ENCODE measurements at regions of chr5 and their contacts with region 1.

Region 1: DNA sequence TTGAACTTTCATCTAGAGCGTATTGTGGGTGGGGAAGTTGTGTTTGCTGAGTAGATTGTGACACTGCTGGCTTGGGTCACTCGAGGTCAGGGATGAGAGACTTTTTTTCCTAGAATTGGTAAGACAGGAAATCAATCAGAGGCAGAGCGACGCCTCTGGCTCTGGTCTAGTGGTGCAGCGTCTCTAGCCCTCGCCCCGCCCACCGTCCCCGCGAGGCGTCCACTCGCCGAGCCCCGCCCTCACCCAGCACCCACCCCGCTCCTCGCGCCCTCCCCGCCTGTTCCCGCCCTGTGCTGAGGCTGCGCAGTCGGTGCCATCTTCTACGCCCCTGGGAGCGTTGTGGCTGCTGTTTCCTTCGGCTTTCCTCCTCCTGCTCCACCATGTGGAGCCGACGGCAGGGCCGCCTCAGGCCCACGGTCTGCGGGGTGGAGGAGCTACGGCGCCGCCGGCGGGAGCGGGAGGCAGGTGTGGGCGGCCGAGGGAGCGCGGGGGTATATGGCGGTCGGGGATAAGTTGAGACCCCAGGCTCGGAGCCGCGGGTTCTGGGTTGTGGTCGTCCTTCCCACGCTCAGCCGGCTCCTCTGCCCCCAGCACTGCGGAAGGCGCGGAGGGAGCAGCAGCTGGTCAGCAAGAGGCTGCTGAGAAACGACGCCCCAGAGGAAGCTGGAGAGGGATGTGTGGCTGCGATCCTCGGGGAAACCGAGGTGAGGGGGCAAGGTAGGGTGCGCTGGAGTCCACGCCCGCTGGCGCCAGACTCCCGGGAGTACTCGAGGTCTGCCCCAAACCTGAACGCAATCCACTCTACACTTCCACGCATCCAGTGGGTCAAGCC is at the start of gene TMCO6:
- DNase-seq: peak; percentile 99
- ATAC-seq: peak; percentile 98 to 99 (median 99)
- H3K4me3 ChIP-seq: peak within 1 kb of the TSS; percentile 38 to 92 (median 79)
- H3K27ac ChIP-seq: peak within 1 kb of the TSS; percentile 83 to 95 (median 92)
- H3K4me1 ChIP-seq: peaks cover 0 to 40% (median 17%) of the 10 kb centered on the region in 12 donors
- H3K27me3 ChIP-seq: no peaks in the 10 kb centered on the region
- CTCF ChIP-seq: peak; percentile 58 to 87 (median 70)
- POLR2A ChIP-seq: peak in 1 of 2 donors; percentile 67
- total RNA-seq, gene TMCO6: 2.2 to 11.7 (median 3.3) TPM

Region 2: GRCh38 chr5:140372971-140373487 is 266.3 kb before region 1 on chr5:
- intact Hi-C with region 1: loop called in 6 of 10 experiments (anchors 2 to 10 kb)
- DNase-seq: peak; percentile 75 to 79 (median 78)
- ATAC-seq: peak; percentile 39 to 90 (median 86)
- H3K4me3 ChIP-seq: no peak overlapping the region
- H3K27ac ChIP-seq: peak overlapping the region in 1 of 12 donors; percentile 3
- H3K4me1 ChIP-seq: peaks cover 0 to 9% (median 8%) of the 10 kb centered on the region in 12 donors
- H3K27me3 ChIP-seq: no peaks in the 10 kb centered on the region
- CTCF ChIP-seq: peak; percentile 69 to 90 (median 79)
- POLR2A ChIP-seq: no peak

Region 3: GRCh38 chr5:140401362-140402257 is 237.8 kb before region 1 on chr5 and contains the start of gene ANKHD1:
- intact Hi-C with region 1: loop called in 3 of 10 experiments (anchors 5 to 10 kb)
- DNase-seq: peak; percentile 99
- ATAC-seq: peak; percentile 92 to 97 (median 96)
- H3K4me3 ChIP-seq: peak within 1 kb of the TSS; percentile 68 to 100 (median 94)
- H3K27ac ChIP-seq: peak within 1 kb of the TSS; percentile 80 to 98 (median 96)
- H3K4me1 ChIP-seq: peaks cover 12 to 42% (median 30%) of the 10 kb centered on the region in 12 donors
- H3K27me3 ChIP-seq: no peaks in the 10 kb centered on the region
- CTCF ChIP-seq: peak in 2 of 12 donors; percentile 3 to 24
- POLR2A ChIP-seq: peak; percentile 95 to 98
- total RNA-seq, gene ANKHD1: 49.5 to 78.8 (median 63.6) TPM

Region 4: DNA sequence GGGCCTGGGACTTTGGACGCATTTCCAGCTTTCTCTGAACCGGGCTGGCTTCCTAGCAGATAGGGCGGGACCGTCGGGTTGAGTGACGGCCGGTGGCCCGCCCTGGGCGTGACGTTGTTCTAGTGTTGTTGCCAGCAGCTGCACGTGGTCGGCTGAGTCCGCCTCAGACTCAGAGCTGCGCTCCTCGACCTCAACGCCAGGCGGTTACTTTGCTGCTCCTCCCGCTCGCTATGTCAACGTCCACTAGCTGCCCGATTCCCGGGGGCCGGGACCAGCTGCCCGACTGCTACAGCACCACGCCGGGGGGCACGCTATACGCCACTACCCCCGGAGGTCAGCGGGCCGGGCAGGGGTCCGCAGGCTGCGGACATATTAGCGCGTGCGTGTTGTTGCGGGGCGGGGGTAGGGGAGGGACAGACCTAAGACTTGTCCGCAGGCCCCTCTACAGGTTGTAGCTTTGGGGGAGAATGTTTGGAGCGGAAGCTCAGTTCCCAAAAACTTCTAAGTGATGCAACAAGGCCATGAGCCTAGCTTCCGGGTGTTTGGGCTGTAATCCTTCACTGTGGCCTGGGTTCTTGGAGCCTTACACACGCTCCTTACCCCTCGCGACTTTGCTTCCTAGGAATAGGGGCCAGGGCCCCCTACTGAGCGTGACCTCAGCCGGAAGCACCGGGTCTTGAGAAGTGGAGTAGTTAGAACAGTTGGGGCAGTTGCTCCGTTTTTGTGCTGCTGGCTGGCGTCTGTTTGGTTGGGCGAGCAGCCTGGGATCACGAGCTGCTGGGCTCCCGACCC is 91.7 kb before region 1 on chr5 and contains the start of gene EIF4EBP3:
- intact Hi-C with region 1: loop called in 8 of 10 experiments (anchors 2 to 5 kb)
- DNase-seq: peak; percentile 97 to 98 (median 98)
- ATAC-seq: peak; percentile 90 to 96 (median 94)
- H3K4me3 ChIP-seq: peak within 1 kb of the TSS; percentile 25 to 65 (median 54)
- H3K27ac ChIP-seq: peak within 1 kb of the TSS; percentile 83 to 98 (median 94)
- H3K4me1 ChIP-seq: peaks cover 14 to 50% (median 43%) of the 10 kb centered on the region in 12 donors
- H3K27me3 ChIP-seq: no peaks in the 10 kb centered on the region
- CTCF ChIP-seq: peak; percentile 35 to 81 (median 56)
- POLR2A ChIP-seq: peak in 1 of 2 donors; percentile 83
- total RNA-seq, gene EIF4EBP3: 4.7 to 34.9 (median 14.6) TPM

Region 5: DNA sequence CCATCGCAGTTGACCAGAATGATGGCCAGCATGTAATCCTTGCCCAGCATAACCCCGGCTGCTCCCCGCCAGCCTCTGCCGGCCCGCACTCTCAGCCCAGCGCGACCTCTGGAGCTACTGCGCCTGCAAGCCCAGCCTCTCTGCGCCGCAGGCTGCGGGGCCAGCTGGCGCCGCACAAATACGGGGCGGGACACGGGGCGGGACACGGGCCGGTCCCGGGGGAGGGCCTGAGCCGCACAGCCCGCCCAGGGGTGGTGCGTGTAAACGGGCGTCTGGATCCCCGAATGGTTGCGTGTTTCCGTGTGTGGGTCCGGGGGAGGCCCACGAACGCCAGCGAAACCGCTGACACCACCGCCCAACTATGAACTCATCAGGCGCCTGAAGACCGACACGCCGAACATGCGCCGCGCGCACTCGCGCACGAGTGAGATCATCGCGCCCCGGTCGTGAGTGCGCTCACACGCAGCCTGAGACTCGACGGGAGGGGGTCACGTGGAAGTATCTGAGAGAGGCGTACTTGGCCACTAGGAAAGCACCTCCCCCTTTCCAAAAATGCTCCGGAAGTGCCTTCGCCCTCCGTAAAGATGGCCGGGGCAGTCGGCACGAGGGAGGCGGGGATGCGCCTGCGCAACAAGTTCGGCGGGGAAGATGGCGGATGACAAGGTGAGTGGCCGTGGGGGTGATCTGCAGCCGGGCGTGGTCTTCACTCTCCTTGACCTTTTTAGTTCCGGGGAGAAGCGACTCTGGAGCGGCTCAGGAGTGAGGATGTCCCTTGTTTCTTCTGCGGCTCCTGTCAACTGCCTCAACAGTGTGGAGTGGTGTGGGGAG is 75.0 kb before region 1 on chr5 and contains the starts of genes APBB3 and SLC35A4:
- intact Hi-C with region 1: loop called in 6 of 10 experiments (anchors 2 to 5 kb)
- DNase-seq: peak; percentile 96 to 98 (median 98)
- ATAC-seq: peak; percentile 94 to 96 (median 94)
- H3K4me3 ChIP-seq: peak within 1 kb of the TSS; percentile 57 to 89 (median 76)
- H3K27ac ChIP-seq: peak within 1 kb of the TSS; percentile 90 to 97 (median 94)
- H3K4me1 ChIP-seq: peaks cover 9 to 64% (median 45%) of the 10 kb centered on the region in 12 donors
- H3K27me3 ChIP-seq: no peaks in the 10 kb centered on the region
- CTCF ChIP-seq: no peak
- POLR2A ChIP-seq: peak in 1 of 2 donors; percentile 83
- total RNA-seq, gene APBB3: 3.6 to 23.1 (median 11.4) TPM
- total RNA-seq, gene SLC35A4: 55.5 to 92.1 (median 75.9) TPM

Region 6: GRCh38 chr5:140664359-140665119 is 25.2 kb after region 1 on chr5 and contains the start of gene WDR55:
- intact Hi-C with region 1: loop called in 1 of 10 experiments (anchors 1 kb)
- DNase-seq: peak; percentile 96 to 98 (median 97)
- ATAC-seq: peak; percentile 98 to 99 (median 98)
- H3K4me3 ChIP-seq: peak within 1 kb of the TSS; percentile 50 to 98 (median 90)
- H3K27ac ChIP-seq: peak within 1 kb of the TSS; percentile 90 to 99 (median 94)
- H3K4me1 ChIP-seq: peaks cover 0 to 34% (median 27%) of the 10 kb centered on the region in 12 donors
- H3K27me3 ChIP-seq: no peaks in the 10 kb centered on the region
- CTCF ChIP-seq: no peak
- POLR2A ChIP-seq: peak; percentile 54 to 80
- total RNA-seq, gene WDR55: 9.6 to 17.5 (median 12.2) TPM

Region 7: DNA sequence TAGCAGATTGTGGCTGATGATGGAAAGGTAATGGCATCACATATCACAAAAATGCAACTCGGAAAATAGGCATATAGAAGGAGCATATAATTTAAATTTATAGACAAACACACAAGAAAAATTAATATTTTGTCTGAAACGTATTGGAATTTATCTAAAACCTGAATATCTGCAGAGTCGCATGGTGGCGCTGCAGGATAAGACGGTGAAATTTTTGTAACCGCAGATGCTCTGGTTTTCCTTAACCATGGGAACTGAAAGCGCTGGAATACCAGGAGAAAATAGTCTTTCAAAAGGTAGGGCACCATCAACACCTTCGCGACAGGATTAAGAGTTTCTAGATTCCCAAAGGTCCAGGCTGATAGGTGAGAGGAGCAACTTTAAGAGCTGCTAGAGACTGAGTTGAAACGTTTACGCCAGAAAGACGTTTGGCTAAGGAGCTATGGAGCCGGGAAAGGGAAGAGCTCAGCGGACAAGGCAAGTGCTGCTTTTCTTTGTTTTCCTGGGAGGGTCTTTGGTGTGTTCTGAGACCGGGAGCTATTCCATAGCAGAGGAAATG is 594.8 kb after region 1 on chr5:
- intact Hi-C with region 1: no loop called
- DNase-seq: no peak
- ATAC-seq: no peak
- H3K4me3 ChIP-seq: peak overlapping the region in 9 of 12 donors; percentile 16 to 42 (median 29)
- H3K27ac ChIP-seq: no peak overlapping the region
- H3K4me1 ChIP-seq: peaks cover 0 to 3% (median 0%) of the 10 kb centered on the region in 12 donors
- H3K27me3 ChIP-seq: peaks cover 0 to 7% (median 0%) of the 10 kb centered on the region in 9 donors
- CTCF ChIP-seq: peak in 6 of 12 donors; percentile 13 to 38 (median 30)
- POLR2A ChIP-seq: no peak

Measured in heart left ventricle (tissue), 16 donors.